Activated CD4-positive, alpha-beta T cell treated with anti-CD3 and anti-CD28 coated beads, Interleukin-2, amount 10 ng/mL, durations not matched to agents 24 days and 14 days (primary cell): ENCODE measurements at regions of chr7 and their contacts with region 1.

Region 1: GRCh38 chr7:50317221-50317678 is 12.7 kb downstream of the IKZF1 start:
- DNase-seq: peak; percentile 87
- H3K4me3 Mint-ChIP-seq: peak overlapping the region; percentile 79
- H3K27ac Mint-ChIP-seq: peak overlapping the region; percentile 88
- H3K4me1 Mint-ChIP-seq: peaks cover 87% of the 10 kb centered on the region
- H3K27me3 Mint-ChIP-seq: no peaks in the 10 kb centered on the region

Region 2: GRCh38 chr7:49731836-49732235 is 585.4 kb before region 1 on chr7:
- intact Hi-C with region 1: no loop called
- DNase-seq: no peak
- H3K4me3 Mint-ChIP-seq: no peak overlapping the region
- H3K27ac Mint-ChIP-seq: no peak overlapping the region
- H3K4me1 Mint-ChIP-seq: no peaks in the 10 kb centered on the region
- H3K27me3 Mint-ChIP-seq: no peaks in the 10 kb centered on the region

Region 3: DNA sequence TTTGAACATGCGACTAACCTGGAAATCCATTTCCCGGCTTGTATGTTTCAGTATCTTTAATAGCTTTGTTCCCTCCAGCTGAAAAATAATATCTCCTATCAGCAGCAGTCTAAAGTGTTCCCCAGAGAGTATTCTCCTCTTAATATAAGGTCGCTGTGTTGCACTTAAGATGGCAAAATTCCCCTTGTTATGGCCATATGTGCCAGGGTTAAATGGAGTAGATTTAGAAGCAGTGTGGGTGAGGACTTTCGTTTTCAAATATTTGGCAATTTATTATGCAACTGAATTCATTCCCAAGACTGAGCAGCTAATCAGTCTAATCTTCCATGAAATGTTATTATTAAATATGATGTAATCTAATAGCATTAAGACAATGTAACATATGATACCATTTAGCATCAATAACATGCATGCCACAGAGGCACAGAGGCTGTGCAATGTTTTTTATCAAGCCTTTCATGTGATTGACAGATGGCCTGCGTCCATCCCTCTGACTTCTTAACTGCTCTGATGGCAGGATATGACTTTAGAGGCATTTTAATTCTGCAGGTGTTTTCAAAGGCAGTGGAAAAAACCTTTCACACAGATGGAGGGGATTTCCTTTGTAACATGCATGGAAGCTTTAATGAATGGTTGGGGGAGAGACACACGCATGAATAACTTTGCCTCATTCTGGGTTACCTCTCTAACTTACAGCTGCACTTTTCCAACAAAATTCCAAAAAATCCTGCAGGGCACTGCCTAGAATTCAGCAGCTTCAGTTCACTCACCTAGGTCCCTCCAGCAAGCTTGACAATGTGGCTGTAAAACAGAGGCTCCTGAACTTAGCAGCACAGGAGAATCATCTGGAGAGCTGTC is 169.1 kb before region 1 on chr7:
- intact Hi-C with region 1: loop called (anchors 2 kb)
- DNase-seq: peak; percentile 81
- H3K4me3 Mint-ChIP-seq: peak overlapping the region; percentile 40
- H3K27ac Mint-ChIP-seq: peak overlapping the region; percentile 81
- H3K4me1 Mint-ChIP-seq: peaks cover 61% of the 10 kb centered on the region
- H3K27me3 Mint-ChIP-seq: no peaks in the 10 kb centered on the region

Region 4: GRCh38 chr7:50335795-50336754 is 18.8 kb after region 1 on chr7:
- intact Hi-C with region 1: loop called (anchors 1 kb)
- DNase-seq: peak; percentile 92
- H3K4me3 Mint-ChIP-seq: no peak overlapping the region
- H3K27ac Mint-ChIP-seq: no peak overlapping the region
- H3K4me1 Mint-ChIP-seq: peaks cover 63% of the 10 kb centered on the region
- H3K27me3 Mint-ChIP-seq: no peaks in the 10 kb centered on the region